ENCODE measurements at regions of chr7 and their contacts with region 1.

Region 1: GRCh38 chr7:148884299-148885022 is 370 bp upstream of the EZH2 start:
- DNase-seq: peak; percentile 93
- H3K4me3 ChIP-seq: peak overlapping the region; percentile 97
- H3K27ac ChIP-seq: peak overlapping the region; percentile 93
- H3K4me1 ChIP-seq: peaks cover 23% of the 10 kb centered on the region
- H3K27me3 ChIP-seq: no peaks in the 10 kb centered on the region
- CTCF ChIP-seq: no peak

Region 2: DNA sequence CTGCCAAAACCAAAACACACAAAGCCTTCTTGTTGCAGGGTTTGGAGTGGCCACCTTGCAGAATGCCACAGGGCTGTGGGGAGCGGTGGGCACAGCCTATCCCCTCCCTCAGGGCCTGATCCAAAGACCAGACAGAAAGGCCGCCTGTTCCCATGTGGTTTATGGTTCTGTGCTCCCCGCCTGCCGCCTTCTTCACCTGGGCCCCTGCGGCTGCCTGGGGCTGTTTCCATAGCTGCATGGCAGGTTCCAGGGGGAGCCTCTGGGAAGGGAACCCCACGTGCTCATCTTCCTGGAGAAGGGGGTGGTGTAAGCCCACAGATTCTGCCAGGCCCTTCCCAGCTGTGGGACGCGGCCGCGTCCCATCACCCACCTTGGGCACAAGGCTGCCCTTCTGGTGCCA is 70.3 kb after region 1 on chr7:
- intact Hi-C with region 1: loop called (anchors 10 kb)
- DNase-seq: no peak
- H3K4me3 ChIP-seq: no peak overlapping the region
- H3K27ac ChIP-seq: no peak overlapping the region
- H3K4me1 ChIP-seq: no peaks in the 10 kb centered on the region
- H3K27me3 ChIP-seq: peaks cover 9% of the 10 kb centered on the region
- CTCF ChIP-seq: no peak

Measured in left ventricle myocardium inferior (tissue), 1 donor.